WTC11 (cell line): ENCODE measurements at regions of chr12 and their contacts with region 1.

Region 1: GRCh38 chr12:51923501-51924271 is 16.4 kb downstream of the ACVRL1 start:
- DNase-seq: peak; percentile 79
- ATAC-seq: peak; percentile 84
- H3K4me3 Mint-ChIP-seq: peak overlapping the region; percentile 52
- H3K27ac Mint-ChIP-seq: no peak overlapping the region
- H3K4me1 Mint-ChIP-seq: peaks cover 26% of the 10 kb centered on the region
- H3K27me3 Mint-ChIP-seq: peaks cover 22% of the 10 kb centered on the region
- CTCF ChIP-seq: peak; percentile 77

Region 2: DNA sequence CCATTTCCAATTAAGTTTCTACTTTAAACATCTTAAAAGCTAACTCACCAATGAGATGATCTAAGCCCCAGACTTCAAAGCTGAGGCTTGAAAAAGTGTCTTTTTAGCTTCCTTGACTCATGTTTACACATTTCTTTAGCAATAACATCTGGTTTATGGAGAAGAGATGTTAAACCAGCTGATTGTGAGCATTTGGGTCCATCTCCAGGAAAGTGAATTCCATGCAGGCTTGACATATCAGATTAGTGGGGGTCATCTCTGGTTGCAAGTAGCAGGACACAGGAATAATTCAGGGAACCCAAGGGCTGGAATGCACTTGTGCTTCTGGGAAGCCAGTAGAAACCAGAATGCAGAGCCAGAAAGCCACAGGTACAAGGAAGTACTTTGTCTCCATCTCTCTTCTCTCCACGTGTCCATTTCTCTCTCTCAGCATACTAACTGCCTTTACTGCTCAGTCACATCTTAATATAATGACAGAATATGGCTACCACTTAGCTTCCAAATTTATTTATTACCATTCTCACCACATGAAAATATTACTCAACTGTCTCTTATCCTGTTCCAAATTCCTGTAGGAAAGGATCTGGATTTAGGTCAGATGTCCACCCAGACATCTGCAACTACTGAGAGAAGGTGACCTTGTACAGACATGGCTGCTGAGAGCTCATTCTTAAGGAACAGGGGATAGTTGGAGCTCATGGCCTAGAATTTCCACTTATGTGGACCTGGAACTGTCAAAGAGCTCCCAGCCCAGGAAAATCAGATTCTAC is 228.3 kb before region 1 on chr12:
- CTCF ChIA-PET with region 1: no interaction called
- POLR2A ChIA-PET with region 1: no interaction called
- DNase-seq: no peak
- ATAC-seq: no peak
- H3K4me3 Mint-ChIP-seq: no peak overlapping the region
- H3K27ac Mint-ChIP-seq: no peak overlapping the region
- H3K4me1 Mint-ChIP-seq: no peaks in the 10 kb centered on the region
- H3K27me3 Mint-ChIP-seq: no peaks in the 10 kb centered on the region
- CTCF ChIP-seq: no peak

Region 3: DNA sequence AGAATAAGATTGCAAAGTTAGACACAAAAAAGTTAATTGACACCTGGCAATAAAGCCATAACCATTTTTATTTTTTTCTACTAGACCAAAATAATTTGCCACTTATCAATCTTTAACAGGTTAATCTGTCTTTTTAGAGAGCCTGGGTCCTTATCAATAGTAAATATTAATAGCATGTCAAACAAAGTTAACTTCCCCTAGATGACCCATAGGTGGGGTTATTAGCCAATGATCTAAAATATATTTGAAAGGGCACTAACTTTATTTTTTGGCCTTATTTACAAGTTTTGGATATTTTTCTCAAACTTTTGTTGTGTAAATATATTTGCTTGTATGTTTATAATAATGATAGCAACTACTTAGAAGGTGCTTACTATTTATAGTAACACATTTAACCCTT is 31.8 kb before region 1 on chr12:
- CTCF ChIA-PET with region 1: interaction called, 91 read pairs
- POLR2A ChIA-PET with region 1: no interaction called
- DNase-seq: no peak
- ATAC-seq: no peak
- H3K4me3 Mint-ChIP-seq: no peak overlapping the region
- H3K27ac Mint-ChIP-seq: no peak overlapping the region
- H3K4me1 Mint-ChIP-seq: peaks cover 22% of the 10 kb centered on the region
- H3K27me3 Mint-ChIP-seq: peaks cover 14% of the 10 kb centered on the region
- CTCF ChIP-seq: no peak

Region 4: DNA sequence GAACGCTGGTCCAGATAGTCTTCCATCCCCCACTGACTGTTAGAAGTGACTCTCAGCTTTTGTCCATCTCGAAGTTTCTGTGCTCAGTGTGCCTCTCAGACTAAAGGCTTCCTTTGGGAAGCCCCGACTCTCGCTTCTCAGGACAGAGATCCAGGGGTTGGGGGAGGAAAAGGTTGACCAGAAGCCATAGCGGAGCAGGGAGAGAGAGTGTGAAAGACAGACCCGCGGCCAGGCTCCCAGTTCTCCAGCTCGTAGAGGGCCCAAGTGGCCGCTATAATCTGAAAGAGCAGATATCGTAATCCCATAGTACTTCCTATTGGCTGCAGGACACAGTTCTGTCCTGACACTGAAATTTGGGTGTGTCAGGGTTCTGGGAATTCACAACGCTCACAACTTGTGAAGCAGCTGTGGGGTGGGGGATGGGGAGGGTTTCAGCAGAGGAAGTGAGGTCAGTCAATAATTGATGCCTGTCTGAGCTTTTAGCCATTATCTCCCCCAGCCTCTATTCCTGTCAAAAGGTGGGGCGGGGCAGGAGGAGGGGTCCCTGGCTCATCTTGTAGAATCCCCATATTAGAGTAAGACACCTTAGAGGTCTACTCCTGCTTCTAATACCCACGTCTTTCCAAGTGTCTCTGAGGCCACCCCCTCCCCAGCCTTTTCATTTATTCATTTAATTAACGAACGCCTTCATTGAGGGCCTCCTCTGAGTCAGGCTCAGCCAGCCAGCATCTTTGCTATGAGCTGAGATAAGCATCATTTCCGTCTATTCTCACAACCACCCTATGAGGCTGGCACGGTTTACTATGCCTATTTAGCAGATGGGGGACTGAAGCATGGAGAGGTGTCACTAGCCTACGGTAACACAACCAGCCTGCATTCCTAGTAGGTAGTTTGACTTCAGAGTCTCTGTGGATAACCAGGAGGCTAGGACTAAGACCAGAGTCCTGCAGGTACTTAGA is 17.9 kb before region 1 on chr12:
- CTCF ChIA-PET with region 1: interaction called, 143 read pairs
- POLR2A ChIA-PET with region 1: interaction called, 3 read pairs
- DNase-seq: no peak
- ATAC-seq: no peak
- H3K4me3 Mint-ChIP-seq: peak overlapping the region; percentile 66
- H3K27ac Mint-ChIP-seq: no peak overlapping the region
- H3K4me1 Mint-ChIP-seq: peaks cover 10% of the 10 kb centered on the region
- H3K27me3 Mint-ChIP-seq: peaks cover 53% of the 10 kb centered on the region
- CTCF ChIP-seq: no peak

Region 5: GRCh38 chr12:51938726-51939125 is 15.0 kb after region 1 on chr12:
- CTCF ChIA-PET with region 1: interaction called, 11 read pairs
- POLR2A ChIA-PET with region 1: no interaction called
- DNase-seq: no peak
- ATAC-seq: 0 out of 2 replicates have a peak, but pooled peaks have one; percentile 22
- H3K4me3 Mint-ChIP-seq: no peak overlapping the region
- H3K27ac Mint-ChIP-seq: no peak overlapping the region
- H3K4me1 Mint-ChIP-seq: peaks cover 9% of the 10 kb centered on the region
- H3K27me3 Mint-ChIP-seq: peaks cover 10% of the 10 kb centered on the region
- CTCF ChIP-seq: no peak

Region 6: DNA sequence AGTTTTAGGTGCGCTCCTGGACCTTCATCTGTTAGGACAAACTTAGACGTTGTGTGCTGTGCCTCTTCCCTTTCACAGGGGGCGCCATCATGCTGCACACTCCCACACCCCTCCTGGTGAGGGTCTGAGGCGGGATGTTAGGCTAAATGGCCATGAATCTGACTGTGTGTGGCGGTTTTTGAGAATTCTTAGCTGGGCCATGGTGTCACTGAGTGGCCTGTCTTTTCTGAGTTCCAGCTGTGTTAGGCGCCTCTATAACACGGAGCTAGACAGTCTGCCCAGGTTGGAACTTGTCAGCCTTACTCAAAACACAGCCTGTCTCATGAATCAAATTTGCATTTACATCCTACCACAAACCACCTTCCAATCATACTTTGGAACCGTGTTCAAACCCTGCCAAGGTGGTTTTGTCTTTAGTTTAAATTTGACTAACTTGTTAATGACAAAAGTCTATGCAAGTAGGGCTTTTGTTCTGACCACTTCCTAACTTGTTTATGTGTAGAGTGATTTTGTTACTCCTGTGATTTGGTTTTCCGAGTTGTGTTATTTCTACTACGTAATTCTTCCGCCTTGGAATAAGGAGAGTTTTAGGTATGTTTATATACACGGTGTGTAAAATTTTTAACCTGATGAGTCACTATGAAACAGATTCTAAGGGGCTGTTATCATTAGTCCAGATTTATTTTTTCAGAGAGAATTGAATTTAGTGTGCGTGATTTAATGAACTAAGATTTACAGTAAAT is 47.4 kb after region 1 on chr12:
- CTCF ChIA-PET with region 1: interaction called, 20 read pairs
- POLR2A ChIA-PET with region 1: no interaction called
- DNase-seq: peak; percentile 63
- ATAC-seq: peak; percentile 95
- H3K4me3 Mint-ChIP-seq: no peak overlapping the region
- H3K27ac Mint-ChIP-seq: peak overlapping the region; percentile 52; the same call in 1 of the 2 replicates
- H3K4me1 Mint-ChIP-seq: peaks cover 32% of the 10 kb centered on the region
- H3K27me3 Mint-ChIP-seq: no peaks in the 10 kb centered on the region
- CTCF ChIP-seq: peak; percentile 82